Gastrocnemius medialis (tissue), 4 donors: ENCODE measurements at regions of chr2 and their contacts with region 1.

Region 1: GRCh38 chr2:160994141-160995002 is 165.9 kb upstream of the TANK start:
- DNase-seq: peak; percentile 71 to 72
- ATAC-seq: peak; percentile 100
- H3K4me3 ChIP-seq: peak overlapping the region in 1 of 4 donors; percentile 6
- H3K27ac ChIP-seq: peak overlapping the region; percentile 36 to 76 (median 47)
- H3K4me1 ChIP-seq: peaks cover 0 to 6% of the 10 kb centered on the region in 2 donors
- H3K27me3 ChIP-seq: no peaks in the 10 kb centered on the region
- CTCF ChIP-seq: peak; percentile 75 to 88 (median 84)
- POLR2A ChIP-seq: no peak

Region 2: GRCh38 chr2:160252278-160252887 is 742.0 kb before region 1 on chr2:
- in situ Hi-C with region 1: loop called in 2 of 4 experiments (anchors 5 to 10 kb)
- intact Hi-C with region 1: no loop called
- DNase-seq: no peak
- ATAC-seq: peak; percentile 45
- H3K4me3 ChIP-seq: peak overlapping the region; percentile 38 to 54 (median 48)
- H3K27ac ChIP-seq: peak overlapping the region; percentile 67 to 87 (median 84)
- H3K4me1 ChIP-seq: peaks cover 51 to 60% of the 10 kb centered on the region in 2 donors
- H3K27me3 ChIP-seq: no peaks in the 10 kb centered on the region
- CTCF ChIP-seq: peak; percentile 69 to 93 (median 82)
- POLR2A ChIP-seq: no peak

Region 3: DNA sequence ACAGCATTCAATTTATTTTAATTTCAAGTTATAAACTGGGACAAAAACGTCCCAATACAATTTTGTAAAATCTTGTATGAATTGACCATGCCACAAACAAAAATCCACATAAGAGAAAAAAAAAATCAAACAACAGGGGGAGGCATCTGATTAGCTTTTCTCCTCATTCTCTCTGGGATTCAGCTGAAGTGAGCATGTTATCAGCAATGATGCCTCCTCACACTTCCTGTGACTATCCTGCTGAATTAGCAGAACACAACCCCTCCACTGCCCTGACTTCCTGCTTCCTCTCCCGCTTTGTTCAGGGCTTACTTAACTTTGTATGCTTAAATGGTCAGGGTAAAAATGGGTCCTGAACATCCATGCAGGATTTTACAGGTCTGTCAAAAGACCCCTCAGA is 662.1 kb before region 1 on chr2:
- in situ Hi-C with region 1: no loop called
- intact Hi-C with region 1: loop called (anchors 5 kb)
- DNase-seq: no peak
- ATAC-seq: no peak
- H3K4me3 ChIP-seq: no peak overlapping the region
- H3K27ac ChIP-seq: no peak overlapping the region
- H3K4me1 ChIP-seq: peaks cover 66 to 67% of the 10 kb centered on the region in 2 donors
- H3K27me3 ChIP-seq: no peaks in the 10 kb centered on the region
- CTCF ChIP-seq: no peak
- POLR2A ChIP-seq: no peak

Region 4: DNA sequence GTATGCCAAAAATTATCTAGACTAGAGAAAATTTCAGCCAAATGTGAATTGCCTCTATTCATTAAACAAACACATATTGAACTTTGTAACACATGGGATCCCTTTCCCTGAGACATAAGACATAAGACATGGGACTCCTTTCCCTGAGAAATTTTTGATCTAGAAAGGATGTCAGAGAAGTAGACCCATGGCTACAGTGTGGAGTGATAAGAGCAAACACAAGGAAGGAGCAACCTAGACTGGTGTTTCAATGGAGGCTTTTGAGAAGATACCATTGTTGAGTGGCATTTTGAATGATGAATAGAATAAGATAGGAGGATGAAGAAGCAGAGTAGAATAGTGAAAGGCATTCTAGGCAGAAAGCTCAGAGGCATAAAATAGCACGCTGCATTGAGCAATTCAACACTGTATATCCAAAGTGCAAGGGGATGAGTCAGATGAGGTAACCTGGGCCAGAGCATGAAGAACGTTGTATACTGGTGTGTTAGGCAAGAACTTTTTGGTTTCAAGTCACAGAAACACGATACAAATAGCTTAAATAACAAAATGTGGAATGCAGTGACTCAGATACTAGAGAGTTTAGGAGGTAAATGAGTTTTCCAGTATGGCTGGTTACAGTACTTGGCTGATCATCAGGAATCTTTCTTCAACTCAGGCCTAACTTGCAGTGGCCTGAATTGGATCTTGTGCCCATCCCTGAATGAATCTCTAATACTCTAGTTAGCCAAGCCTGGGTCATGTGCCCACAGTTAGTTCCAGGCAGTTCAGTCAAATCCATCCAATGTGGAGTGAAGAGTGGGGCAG is 36.1 kb after region 1 on chr2:
- in situ Hi-C with region 1: no loop called
- intact Hi-C with region 1: loop called (anchors 1 kb)
- DNase-seq: peak; percentile 80 to 84
- ATAC-seq: peak; percentile 99
- H3K4me3 ChIP-seq: no peak overlapping the region
- H3K27ac ChIP-seq: peak overlapping the region; percentile 70 to 78 (median 74)
- H3K4me1 ChIP-seq: peaks cover 6 to 15% of the 10 kb centered on the region in 2 donors
- H3K27me3 ChIP-seq: no peaks in the 10 kb centered on the region
- CTCF ChIP-seq: no peak
- POLR2A ChIP-seq: no peak

Region 5: GRCh38 chr2:161044095-161044865 is 49.9 kb after region 1 on chr2:
- in situ Hi-C with region 1: no loop called
- intact Hi-C with region 1: no loop called
- DNase-seq: peak in 1 of 2 donors; percentile 53
- ATAC-seq: peak; percentile 66 to 73
- H3K4me3 ChIP-seq: no peak overlapping the region
- H3K27ac ChIP-seq: peak overlapping the region; percentile 15 to 66 (median 37)
- H3K4me1 ChIP-seq: peaks cover 14 to 23% of the 10 kb centered on the region in 2 donors
- H3K27me3 ChIP-seq: no peaks in the 10 kb centered on the region
- CTCF ChIP-seq: no peak
- POLR2A ChIP-seq: no peak